ENCODE measurements at regions of chr5 and their contacts with region 1.

Region 1: DNA sequence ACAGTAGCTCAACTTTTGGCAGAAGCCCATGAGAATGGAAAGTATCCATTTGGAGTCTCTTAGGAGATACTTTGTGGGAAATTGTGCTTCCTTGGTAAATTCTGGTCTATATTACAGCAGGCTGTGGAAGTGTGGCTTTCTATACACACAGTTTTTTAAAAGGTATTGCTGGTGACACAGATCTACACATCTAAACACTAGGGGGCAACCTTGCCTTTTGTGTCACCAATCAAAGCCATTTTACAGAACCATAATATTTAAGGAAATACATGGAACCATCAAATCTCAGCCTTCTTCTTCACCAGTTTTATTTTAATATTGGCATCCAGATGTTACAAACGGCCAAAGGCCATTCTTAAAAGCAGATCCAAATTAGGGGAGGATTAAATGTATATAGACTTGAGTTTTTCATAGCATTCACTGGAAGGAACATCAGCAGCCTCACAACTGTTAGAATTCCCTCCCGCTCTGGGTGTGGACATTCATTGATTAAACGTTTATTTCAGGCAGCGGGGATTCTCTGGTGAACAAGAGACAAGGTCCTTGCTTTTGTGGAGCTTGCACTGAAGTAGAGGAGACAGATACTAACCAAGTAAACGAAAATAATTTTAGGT is 132.4 kb upstream of the EPB41L4A start:
- DNase-seq: peak; percentile 75
- H3K4me3 ChIP-seq: no peak overlapping the region
- H3K27ac ChIP-seq: no peak overlapping the region
- H3K4me1 ChIP-seq: no peaks in the 10 kb centered on the region
- CTCF ChIP-seq: peak; percentile 96

Region 2: GRCh38 chr5:111984044-111984443 is 567.5 kb before region 1 on chr5:
- CTCF ChIA-PET with region 1: no interaction called
- POLR2A ChIA-PET with region 1: no interaction called
- intact Hi-C with region 1: no loop called
- DNase-seq: no peak
- H3K4me3 ChIP-seq: no peak overlapping the region
- H3K27ac ChIP-seq: no peak overlapping the region
- H3K4me1 ChIP-seq: no peaks in the 10 kb centered on the region
- CTCF ChIP-seq: no peak

Region 3: GRCh38 chr5:112604732-112605630 is 53.5 kb after region 1 on chr5:
- CTCF ChIA-PET with region 1: no interaction called
- POLR2A ChIA-PET with region 1: no interaction called
- intact Hi-C with region 1: loop called (anchors 1 kb)
- DNase-seq: peak; percentile 69
- H3K4me3 ChIP-seq: no peak overlapping the region
- H3K27ac ChIP-seq: no peak overlapping the region
- H3K4me1 ChIP-seq: no peaks in the 10 kb centered on the region
- CTCF ChIP-seq: peak; percentile 80

Region 4: GRCh38 chr5:112691758-112692157 is 140.2 kb after region 1 on chr5:
- CTCF ChIA-PET with region 1: no interaction called
- POLR2A ChIA-PET with region 1: no interaction called
- intact Hi-C with region 1: loop called (anchors 5 kb)
- DNase-seq: peak; percentile 71
- H3K4me3 ChIP-seq: no peak overlapping the region
- H3K27ac ChIP-seq: no peak overlapping the region
- H3K4me1 ChIP-seq: no peaks in the 10 kb centered on the region
- CTCF ChIP-seq: peak; percentile 79

Region 5: GRCh38 chr5:112757468-112758208 is 206.1 kb after region 1 on chr5:
- CTCF ChIA-PET with region 1: interaction called, 4 read pairs
- POLR2A ChIA-PET with region 1: no interaction called
- intact Hi-C with region 1: loop called (anchors 1 kb)
- DNase-seq: peak; percentile 74
- H3K4me3 ChIP-seq: no peak overlapping the region
- H3K27ac ChIP-seq: no peak overlapping the region
- H3K4me1 ChIP-seq: no peaks in the 10 kb centered on the region
- CTCF ChIP-seq: peak; percentile 94

Region 6: GRCh38 chr5:112848116-112848811 is 296.7 kb after region 1 on chr5:
- CTCF ChIA-PET with region 1: no interaction called
- POLR2A ChIA-PET with region 1: interaction called, 3 read pairs
- intact Hi-C with region 1: loop called (anchors 1 kb)
- DNase-seq: peak; percentile 79
- H3K4me3 ChIP-seq: no peak overlapping the region
- H3K27ac ChIP-seq: no peak overlapping the region
- H3K4me1 ChIP-seq: no peaks in the 10 kb centered on the region
- CTCF ChIP-seq: peak; percentile 83

Region 7: DNA sequence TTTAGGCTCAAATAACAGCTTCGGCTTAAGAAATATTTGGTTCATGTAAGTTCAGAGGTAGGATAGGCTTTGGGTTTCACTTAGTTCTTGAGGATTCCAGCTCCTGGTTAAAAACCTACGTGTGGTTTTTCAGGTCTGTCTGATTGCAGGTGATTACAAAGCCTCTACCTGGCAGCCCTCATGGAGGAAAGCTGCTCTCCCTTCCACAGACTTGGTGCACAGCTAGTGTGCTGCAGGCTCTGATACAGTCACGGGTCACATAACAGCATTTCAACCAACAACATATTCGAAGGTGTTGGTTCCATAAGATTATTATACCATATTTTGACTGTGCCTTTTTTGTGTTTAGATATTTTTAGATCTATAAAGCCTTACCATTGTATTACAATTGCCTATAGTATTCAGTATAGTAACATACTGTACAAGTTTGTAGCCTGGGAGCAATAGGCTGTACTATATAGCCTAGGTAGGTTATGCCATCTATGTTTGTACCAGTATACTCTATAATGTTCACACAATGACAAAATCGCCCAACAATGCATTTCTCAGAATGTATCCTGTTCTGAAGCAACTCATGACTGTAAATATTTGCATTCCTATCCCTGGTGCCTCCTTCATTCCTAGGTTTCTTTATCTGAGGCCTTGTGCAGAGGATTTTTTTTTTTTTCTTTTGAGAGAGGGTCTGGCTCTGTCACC is 417.0 kb after region 1 on chr5:
- CTCF ChIA-PET with region 1: no interaction called
- POLR2A ChIA-PET with region 1: interaction called, 3 read pairs
- intact Hi-C with region 1: loop called (anchors 2 kb)
- DNase-seq: no peak
- H3K4me3 ChIP-seq: no peak overlapping the region
- H3K27ac ChIP-seq: no peak overlapping the region
- H3K4me1 ChIP-seq: peaks cover 8% of the 10 kb centered on the region
- CTCF ChIP-seq: no peak

Measured in OCI-LY7 (cell line).